ENCODE measurements at regions of chr12 and their contacts with region 1.

Region 1: GRCh38 chr12:14769969-14770495 is 33.2 kb downstream of the WBP11 start:
- DNase-seq: peak; percentile 77 to 90
- H3K4me3 ChIP-seq: peak overlapping the region; percentile 99
- H3K27ac ChIP-seq: peak overlapping the region; percentile 83
- H3K4me1 ChIP-seq: peaks cover 27% of the 10 kb centered on the region
- H3K27me3 ChIP-seq: no peaks in the 10 kb centered on the region
- CTCF ChIP-seq: peak; percentile 87

Region 2: GRCh38 chr12:14239350-14239934 is 530.6 kb before region 1 on chr12:
- CTCF ChIA-PET with region 1: no interaction called
- POLR2A ChIA-PET with region 1: interaction called, 6 read pairs
- intact Hi-C with region 1: loop called (anchors 5 kb)
- DNase-seq: peak; percentile 84 to 93
- H3K4me3 ChIP-seq: peak overlapping the region; percentile 51
- H3K27ac ChIP-seq: peak overlapping the region; percentile 94
- H3K4me1 ChIP-seq: peaks cover 28% of the 10 kb centered on the region
- H3K27me3 ChIP-seq: no peaks in the 10 kb centered on the region
- CTCF ChIP-seq: no peak

Region 3: GRCh38 chr12:14454098-14454907 is 315.7 kb before region 1 on chr12:
- CTCF ChIA-PET with region 1: no interaction called
- POLR2A ChIA-PET with region 1: interaction called, 16 read pairs
- intact Hi-C with region 1: no loop called
- DNase-seq: peak in 1 of 2 experiments; percentile 11
- H3K4me3 ChIP-seq: no peak overlapping the region
- H3K27ac ChIP-seq: no peak overlapping the region
- H3K4me1 ChIP-seq: no peaks in the 10 kb centered on the region
- H3K27me3 ChIP-seq: no peaks in the 10 kb centered on the region
- CTCF ChIP-seq: peak; percentile 60

Region 4: DNA sequence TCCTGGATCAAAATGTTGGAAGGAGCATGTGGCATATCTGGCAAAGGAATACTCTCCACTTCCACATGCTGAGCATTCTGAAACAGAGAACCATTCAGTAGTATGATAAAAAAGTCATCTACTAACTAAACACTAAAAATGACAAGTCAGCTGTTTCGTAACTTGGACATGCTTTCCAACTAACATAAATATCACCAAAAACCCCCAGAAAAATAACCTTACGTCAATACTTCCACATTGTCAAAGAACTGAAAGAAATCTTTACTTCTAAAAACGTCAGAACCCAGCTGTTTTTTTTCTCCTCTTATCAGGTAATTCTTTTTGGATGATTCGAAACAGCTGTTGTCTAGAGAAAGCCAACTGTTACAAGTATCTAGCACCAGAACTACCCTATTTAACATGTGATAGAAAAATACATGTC is 25.0 kb after region 1 on chr12:
- CTCF ChIA-PET with region 1: no interaction called
- POLR2A ChIA-PET with region 1: interaction called, 11 read pairs
- intact Hi-C with region 1: no loop called
- DNase-seq: no peak
- H3K4me3 ChIP-seq: no peak overlapping the region
- H3K27ac ChIP-seq: no peak overlapping the region
- H3K4me1 ChIP-seq: no peaks in the 10 kb centered on the region
- H3K27me3 ChIP-seq: no peaks in the 10 kb centered on the region
- CTCF ChIP-seq: no peak

Region 5: DNA sequence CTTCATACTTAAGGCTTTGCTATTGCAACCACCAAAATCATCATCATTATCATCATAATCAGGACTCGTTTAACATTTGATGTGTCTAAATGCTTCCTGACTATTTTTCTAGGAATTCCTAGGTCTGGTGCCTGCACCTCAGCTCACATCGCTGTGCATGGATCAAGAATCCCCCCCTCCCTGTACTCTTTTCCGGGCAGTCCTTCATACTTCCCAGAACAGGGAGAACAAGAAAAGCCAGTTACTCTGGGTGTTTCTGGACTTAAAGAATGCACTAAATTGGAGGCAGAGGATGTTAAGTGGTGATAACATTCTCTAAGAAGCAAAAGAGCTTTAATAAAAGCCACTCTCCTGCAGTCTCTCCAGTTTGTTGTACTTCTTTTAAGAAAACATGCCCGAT is 158.9 kb after region 1 on chr12:
- CTCF ChIA-PET with region 1: no interaction called
- POLR2A ChIA-PET with region 1: interaction called, 6 read pairs
- intact Hi-C with region 1: loop called (anchors 2 kb)
- DNase-seq: peak; percentile 84 to 97
- H3K4me3 ChIP-seq: peak overlapping the region; percentile 50
- H3K27ac ChIP-seq: peak overlapping the region; percentile 78
- H3K4me1 ChIP-seq: peaks cover 72% of the 10 kb centered on the region
- H3K27me3 ChIP-seq: no peaks in the 10 kb centered on the region
- CTCF ChIP-seq: no peak

Region 6: DNA sequence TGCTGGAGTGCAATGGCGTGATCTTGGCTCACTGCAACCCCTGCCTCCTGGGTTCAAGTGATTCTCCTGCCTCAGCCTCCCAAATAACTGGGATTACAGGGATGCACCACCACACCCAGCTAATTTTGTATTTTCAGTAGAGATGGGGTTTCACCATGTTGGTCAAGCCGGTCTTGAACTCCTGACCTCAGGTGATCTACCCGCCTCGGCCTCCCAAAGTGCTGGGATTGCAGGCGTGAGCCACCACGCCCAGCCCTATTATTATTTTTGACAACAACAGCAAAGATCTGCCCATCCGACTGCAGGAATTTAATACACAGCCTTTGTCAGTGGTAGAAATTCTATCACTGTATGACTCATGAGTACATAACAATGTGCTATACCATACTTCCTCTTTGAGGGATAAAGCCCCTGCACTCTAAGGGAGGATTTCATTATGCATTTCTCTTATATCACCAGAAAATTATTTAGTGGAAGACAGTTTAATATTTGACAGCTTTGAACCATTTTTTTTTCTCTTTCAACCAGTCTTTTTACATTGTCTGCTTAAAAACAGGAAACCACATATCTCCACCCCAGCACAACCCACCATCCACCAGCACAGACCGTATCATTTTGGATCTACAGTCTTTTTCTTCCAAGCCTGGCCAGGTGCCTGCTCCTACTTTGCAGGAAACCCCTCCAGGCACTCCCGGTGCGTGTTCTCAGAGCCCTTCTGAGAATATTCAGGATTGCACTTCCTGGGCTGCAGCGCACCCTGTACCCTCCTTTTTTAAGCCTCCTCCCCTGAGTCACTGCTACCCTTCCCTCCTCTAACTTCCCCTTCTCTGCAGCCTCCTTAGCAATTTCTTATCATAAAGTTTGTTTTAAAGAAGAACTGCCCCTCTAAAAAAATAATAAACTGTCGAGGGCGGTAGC is 190.8 kb after region 1 on chr12:
- CTCF ChIA-PET with region 1: no interaction called
- POLR2A ChIA-PET with region 1: no interaction called
- intact Hi-C with region 1: loop called (anchors 2 kb)
- DNase-seq: peak; percentile 84 to 85
- H3K4me3 ChIP-seq: peak overlapping the region; percentile 54
- H3K27ac ChIP-seq: peak overlapping the region; percentile 83
- H3K4me1 ChIP-seq: peaks cover 53% of the 10 kb centered on the region
- H3K27me3 ChIP-seq: no peaks in the 10 kb centered on the region
- CTCF ChIP-seq: no peak

Measured in PC-9 (cell line).